ENCODE measurements at regions of chr9 and their contacts with region 1.

Region 1: DNA sequence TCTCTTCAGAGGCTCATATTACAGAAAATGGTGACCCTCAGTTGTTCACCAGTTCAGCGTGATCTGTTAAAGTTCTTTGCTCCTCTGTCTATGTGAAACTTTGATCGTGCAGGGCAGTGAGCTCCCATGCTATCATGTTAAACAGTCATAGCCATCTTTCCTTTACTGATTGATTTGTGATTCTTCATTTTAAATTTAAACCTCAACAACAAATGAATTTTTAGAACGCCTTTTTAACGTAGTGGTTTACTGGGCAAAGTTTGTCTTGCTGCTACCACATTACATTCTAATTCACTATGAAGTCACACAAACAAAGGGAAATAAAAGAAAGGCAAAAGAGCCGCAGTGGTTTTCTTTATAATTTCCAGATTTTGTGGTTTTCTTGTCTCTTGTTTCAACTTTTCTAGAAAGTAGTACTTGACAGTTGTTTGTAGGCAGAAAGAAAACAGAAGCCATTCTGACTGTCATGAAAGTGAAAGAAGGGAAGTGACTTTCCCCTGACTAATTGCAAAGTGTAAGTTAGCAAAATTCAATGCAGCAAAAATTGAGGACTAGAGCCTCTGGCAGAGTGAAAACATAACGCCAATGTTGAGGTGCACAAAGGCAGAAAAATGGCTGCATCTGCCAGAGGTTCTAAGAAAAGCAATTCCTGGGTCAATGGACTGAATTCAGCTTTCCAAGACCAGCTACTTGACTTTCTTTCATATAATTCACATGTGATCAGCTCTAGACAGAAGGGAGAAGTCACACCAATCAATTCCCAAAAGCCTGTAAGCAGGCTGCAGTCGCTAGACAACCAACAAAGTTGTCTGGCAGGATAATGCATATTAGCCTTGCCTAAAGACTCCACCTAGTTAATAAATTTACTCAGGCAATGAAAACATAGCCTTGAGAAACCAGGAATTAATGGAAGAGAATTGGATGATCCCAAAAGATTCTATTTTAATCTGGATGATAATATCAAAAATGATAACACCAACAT is 7.1 kb upstream of the IFNA6 start:
- DNase-seq: peak; percentile 30
- H3K4me3 Mint-ChIP-seq: peak overlapping the region; percentile 3
- H3K27ac Mint-ChIP-seq: no peak overlapping the region
- H3K4me1 Mint-ChIP-seq: peaks cover 20% of the 10 kb centered on the region
- H3K27me3 Mint-ChIP-seq: peaks cover 38% of the 10 kb centered on the region

Region 2: DNA sequence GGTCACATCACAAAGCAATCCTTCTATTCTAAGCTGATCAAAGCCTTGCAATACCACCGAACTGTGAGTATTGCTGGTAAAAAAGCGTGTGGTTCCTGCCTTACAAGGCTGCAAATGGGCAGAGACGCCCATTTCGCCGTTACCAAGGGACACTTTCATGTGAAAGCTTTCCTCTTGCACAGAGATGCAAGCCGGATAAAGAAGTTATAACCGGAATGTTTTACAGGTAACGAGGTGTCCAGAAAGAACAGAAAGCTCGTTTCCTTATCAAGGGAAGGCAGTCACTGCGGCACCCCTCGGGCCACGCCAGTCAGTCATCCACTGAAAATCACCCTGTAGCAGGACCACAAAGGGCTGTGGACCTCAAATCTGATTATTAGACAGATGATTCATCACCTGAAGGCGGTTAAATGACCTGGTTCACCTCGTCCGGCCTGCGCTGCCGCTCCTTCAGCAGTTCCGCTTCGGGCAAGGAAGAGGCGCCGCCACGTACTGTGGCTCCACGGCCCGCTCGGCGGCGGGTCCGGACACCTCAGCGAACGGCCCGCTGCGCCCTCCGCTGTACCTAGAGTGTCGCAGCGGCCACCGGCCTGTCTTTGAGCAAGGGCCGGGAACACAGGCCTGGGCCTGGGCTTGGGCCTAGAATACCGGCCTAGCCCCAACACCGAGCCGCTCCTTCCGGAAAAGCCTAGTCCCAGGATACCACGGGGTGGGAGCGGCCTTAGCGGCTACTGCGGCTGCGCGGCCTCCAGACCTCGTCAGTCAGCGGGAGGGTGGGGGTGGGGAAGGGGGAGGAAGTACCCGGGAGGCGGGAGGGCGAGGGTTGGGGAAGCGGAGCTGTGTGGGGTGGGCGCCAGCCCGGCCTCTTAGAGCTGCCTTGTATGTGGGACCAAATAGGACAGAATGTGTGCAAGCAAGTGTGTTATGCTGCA is 22.8 kb before region 1 on chr9 and contains the start of gene KLHL9:
- CTCF ChIA-PET with region 1: interaction called, 3 read pairs
- POLR2A ChIA-PET with region 1: interaction called, 3 read pairs
- intact Hi-C with region 1: loop called (anchors 1 kb)
- DNase-seq: peak; percentile 92
- H3K4me3 Mint-ChIP-seq: peak within 1 kb of the TSS; percentile 86
- H3K27ac Mint-ChIP-seq: peak within 1 kb of the TSS; percentile 87
- H3K4me1 Mint-ChIP-seq: peaks cover 50% of the 10 kb centered on the region
- H3K27me3 Mint-ChIP-seq: no peaks in the 10 kb centered on the region
- total RNA-seq, gene KLHL9: 15.9 to 16.0 TPM

Region 3: DNA sequence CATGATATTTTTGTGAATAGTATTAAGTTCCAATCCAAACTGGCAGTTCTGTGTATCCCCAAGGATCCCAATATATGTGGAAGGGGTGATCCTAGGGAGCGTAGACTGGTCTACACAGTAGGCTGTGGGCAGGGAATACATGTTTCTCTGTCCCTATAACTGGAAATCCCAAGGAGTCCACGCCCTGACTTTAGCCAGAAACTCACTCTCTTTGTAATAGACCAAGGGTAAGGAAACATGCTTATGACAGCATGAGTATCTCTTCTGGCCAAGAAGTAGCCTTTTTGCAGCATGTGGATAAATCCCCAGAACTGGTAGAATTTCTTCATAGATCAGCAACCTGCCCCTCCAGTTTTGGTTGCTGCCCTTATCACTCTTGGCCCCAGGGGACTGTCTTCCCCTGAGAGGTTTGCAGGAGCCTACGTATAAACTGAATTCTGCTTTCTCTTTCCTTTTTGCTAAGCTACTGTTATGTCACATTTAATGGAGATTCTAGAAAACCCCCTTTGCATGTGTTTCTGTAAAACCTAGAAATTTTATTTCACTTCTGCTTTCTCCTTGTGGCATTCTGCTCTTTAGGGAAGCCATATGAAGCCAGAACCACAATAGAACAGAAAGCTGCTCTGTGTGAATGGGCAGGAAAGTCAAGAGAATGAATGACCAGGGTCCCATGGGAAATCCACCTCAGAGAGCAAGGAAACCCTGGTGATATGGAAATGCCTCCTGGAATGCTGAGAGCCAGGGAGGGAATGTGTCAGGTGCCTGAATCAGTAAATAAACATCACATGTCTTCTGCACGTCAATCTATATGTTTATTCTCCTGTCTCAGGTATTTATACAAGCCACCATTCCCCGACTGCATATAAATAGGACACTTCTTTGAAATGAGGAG is 23.9 kb after region 1 on chr9:
- CTCF ChIA-PET with region 1: no interaction called
- POLR2A ChIA-PET with region 1: no interaction called
- intact Hi-C with region 1: loop called (anchors 1 kb)
- DNase-seq: peak; percentile 25
- H3K4me3 Mint-ChIP-seq: no peak overlapping the region
- H3K27ac Mint-ChIP-seq: no peak overlapping the region
- H3K4me1 Mint-ChIP-seq: peaks cover 13% of the 10 kb centered on the region
- H3K27me3 Mint-ChIP-seq: peaks cover 35% of the 10 kb centered on the region

Region 4: GRCh38 chr9:21709464-21710058 is 351.8 kb after region 1 on chr9:
- CTCF ChIA-PET with region 1: no interaction called
- POLR2A ChIA-PET with region 1: no interaction called
- intact Hi-C with region 1: loop called (anchors 1 kb)
- DNase-seq: peak; percentile 65
- H3K4me3 Mint-ChIP-seq: no peak overlapping the region
- H3K27ac Mint-ChIP-seq: no peak overlapping the region
- H3K4me1 Mint-ChIP-seq: peaks cover 7% of the 10 kb centered on the region
- H3K27me3 Mint-ChIP-seq: no peaks in the 10 kb centered on the region

Region 5: GRCh38 chr9:22052376-22052945 is 694.7 kb after region 1 on chr9:
- CTCF ChIA-PET with region 1: no interaction called
- POLR2A ChIA-PET with region 1: no interaction called
- intact Hi-C with region 1: loop called (anchors 1 kb)
- DNase-seq: peak; percentile 50
- H3K4me3 Mint-ChIP-seq: no peak overlapping the region
- H3K27ac Mint-ChIP-seq: no peak overlapping the region
- H3K4me1 Mint-ChIP-seq: peaks cover 26% of the 10 kb centered on the region
- H3K27me3 Mint-ChIP-seq: peaks cover 12% of the 10 kb centered on the region